Dorsolateral prefrontal cortex (tissue), 120 donors: ENCODE measurements at regions of chr22 and their contacts with region 1.

Region 1: DNA sequence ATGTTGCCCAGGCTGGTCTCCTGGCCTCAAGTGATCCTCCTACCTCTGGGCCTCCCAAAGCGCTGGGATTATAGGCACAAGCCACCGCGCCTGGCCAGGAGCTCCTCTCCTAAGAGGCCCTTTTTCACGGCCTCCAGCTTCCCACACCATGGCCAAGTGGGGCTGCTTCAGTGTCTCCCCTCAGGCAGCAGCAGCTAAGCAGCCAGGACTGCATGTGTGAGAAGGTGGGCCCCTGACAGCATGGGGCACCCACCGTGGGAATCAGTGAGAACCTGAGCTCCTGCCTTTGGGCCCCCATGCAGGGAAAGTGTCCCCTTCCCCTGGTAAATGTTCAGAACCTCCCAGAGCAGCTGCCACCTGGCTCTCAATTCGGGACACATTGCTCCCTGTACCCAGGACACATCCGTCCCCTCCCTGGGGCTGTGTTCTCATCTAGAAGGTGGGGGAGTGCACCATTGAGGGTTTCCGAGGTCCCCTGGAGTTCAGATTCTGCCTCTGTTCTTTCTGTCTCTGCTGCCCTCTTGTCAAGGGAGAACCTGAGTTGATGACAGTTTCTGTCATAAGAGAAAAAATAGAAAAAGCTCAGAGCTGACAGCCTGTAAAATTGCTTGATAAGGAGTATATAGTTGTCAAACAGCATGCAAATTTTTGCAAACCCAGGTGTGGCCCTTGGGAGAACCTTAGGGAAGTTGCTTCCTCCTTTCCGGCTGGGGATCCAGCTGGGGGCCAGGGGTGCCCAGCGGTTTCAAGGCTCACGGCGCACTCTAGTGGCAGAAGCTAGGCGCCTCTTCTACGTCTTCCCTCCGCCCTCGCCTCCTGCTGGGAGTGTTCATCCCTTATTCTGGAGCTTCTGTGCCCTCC is 29.7 kb downstream of the FAM83F start:
- DNase-seq: peak in 9 of 10 donors; percentile 59 to 82 (median 74)
- H3K4me3 ChIP-seq: no peak overlapping the region
- H3K27ac ChIP-seq: no peak overlapping the region
- H3K27me3 ChIP-seq: no peaks in the 10 kb centered on the region
- CTCF ChIP-seq: peak; percentile 56 to 98 (median 88)

Region 2: GRCh38 chr22:39559454-39560105 is 464.9 kb before region 1 on chr22:
- intact Hi-C with region 1: loop called in 1 of 2 experiments (anchors 5 kb)
- DNase-seq: no peak
- H3K4me3 ChIP-seq: peak overlapping the region in 49 of 59 donors; percentile 7 to 72 (median 59)
- H3K27ac ChIP-seq: peak overlapping the region in 1 of 59 donors; percentile 11
- H3K27me3 ChIP-seq: peaks cover 0 to 38% (median 4%) of the 10 kb centered on the region in 45 donors
- CTCF ChIP-seq: peak in 24 of 56 donors; percentile 11 to 40 (median 22)

Region 3: GRCh38 chr22:39622881-39623367 is 401.5 kb before region 1 on chr22:
- intact Hi-C with region 1: loop called (anchors 2 to 5 kb)
- DNase-seq: peak in 5 of 10 donors; percentile 26 to 64 (median 55)
- H3K4me3 ChIP-seq: no peak overlapping the region
- H3K27ac ChIP-seq: no peak overlapping the region
- H3K27me3 ChIP-seq: peaks cover 0 to 45% (median 0%) of the 10 kb centered on the region in 45 donors
- CTCF ChIP-seq: peak in 55 of 56 donors; percentile 24 to 72 (median 59)

Region 4: GRCh38 chr22:39898997-39899396 is 125.4 kb before region 1 on chr22:
- intact Hi-C with region 1: loop called in 1 of 2 experiments (anchors 5 kb)
- DNase-seq: no peak
- H3K4me3 ChIP-seq: no peak overlapping the region
- H3K27ac ChIP-seq: no peak overlapping the region
- H3K27me3 ChIP-seq: peaks cover 0 to 2% (median 0%) of the 10 kb centered on the region in 45 donors
- CTCF ChIP-seq: no peak